ENCODE measurements at regions of chr19 and their contacts with region 1.

Region 1: GRCh38 chr19:18203863-18204393 is at the start of gene RAB3A:
- DNase-seq: peak; percentile 99
- ATAC-seq: peak; percentile 94
- H3K4me3 ChIP-seq: peak within 1 kb of the TSS; percentile 73 to 94 (median 83)
- H3K27ac ChIP-seq: peak within 1 kb of the TSS; percentile 60
- H3K4me1 ChIP-seq: peaks cover 13% of the 10 kb centered on the region
- H3K27me3 ChIP-seq: 0 out of 5 replicates have a peak, but pooled peaks cover 0 to 3% of the 10 kb centered on the region in 2 experiments
- CTCF ChIP-seq: peak; percentile 36
- EP300 ChIP-seq: no peak
- POLR2A ChIP-seq: no peak; a peak in 1 of 4 replicates
- RAD21 ChIP-seq: no peak; the same call in 1 of the 2 replicates
- total RNA-seq, gene RAB3A: 0.53 and 0.58 TPM in 2 replicates

Region 2: DNA sequence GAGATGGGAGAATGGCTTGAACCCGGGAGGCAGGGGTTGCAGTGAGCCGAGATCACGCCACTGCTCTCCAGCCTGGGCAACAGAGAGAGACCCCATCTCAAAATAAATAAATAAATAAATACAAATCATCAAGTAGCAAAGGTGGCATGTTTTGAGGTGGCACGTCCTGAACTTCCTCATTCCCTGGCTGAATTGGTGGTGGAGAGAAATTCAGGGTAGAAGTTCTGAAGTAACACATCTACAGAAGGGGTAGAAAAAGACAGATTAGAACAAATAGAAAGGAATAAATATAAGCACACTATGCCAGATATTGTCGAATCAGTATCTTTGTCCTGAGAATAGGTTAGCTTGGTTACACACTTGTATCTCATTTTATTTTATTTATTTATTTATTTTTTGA is 24.0 kb before region 1 on chr19:
- CTCF ChIA-PET with region 1: no interaction called
- POLR2A ChIA-PET with region 1: no interaction called
- in situ Hi-C with region 1: no loop called
- intact Hi-C with region 1: no loop called
- DNase-seq: no peak
- ATAC-seq: no peak
- H3K4me3 ChIP-seq: no peak overlapping the region
- H3K27ac ChIP-seq: no peak overlapping the region
- H3K4me1 ChIP-seq: peaks cover 7% of the 10 kb centered on the region
- H3K27me3 ChIP-seq: no peaks in the 10 kb centered on the region
- CTCF ChIP-seq: no peak
- EP300 ChIP-seq: no peak
- POLR2A ChIP-seq: no peak
- RAD21 ChIP-seq: no peak

Region 3: DNA sequence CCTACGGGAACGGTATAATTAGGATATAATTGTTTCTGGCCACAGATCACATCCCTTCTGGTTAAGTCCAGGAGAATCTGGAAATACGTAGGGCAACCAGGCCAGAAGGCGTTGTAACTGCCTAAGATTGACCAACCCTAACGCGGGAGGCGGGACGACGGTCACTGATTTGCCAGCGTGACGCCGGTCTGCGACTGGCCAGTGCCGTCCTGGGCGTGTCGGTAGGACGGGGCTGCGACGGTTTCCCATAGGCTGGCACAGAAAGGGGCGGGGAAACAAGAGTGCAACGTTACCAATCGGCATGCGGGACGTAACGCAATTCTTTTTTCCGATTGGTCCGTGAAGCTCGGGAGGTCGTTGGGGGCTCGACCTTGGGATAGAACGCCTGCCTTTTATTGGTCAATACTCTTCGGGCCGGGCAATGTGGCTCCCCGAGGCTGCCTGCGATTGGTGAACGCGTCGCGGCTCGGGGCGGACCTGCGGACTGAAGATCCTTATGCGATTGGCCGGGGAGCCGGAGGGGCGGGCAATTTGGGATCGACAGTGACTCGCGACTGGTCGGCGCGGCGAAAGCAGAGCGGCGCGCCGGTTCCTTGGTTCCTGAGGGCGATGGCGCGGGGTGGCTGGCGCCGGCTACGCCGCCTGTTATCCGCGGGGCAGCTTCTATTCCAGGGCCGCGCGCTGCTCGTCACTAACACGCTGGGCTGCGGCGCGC is 11.1 kb before region 1 on chr19 and contains the start of gene MPV17L2:
- CTCF ChIA-PET with region 1: no interaction called
- POLR2A ChIA-PET with region 1: interaction called, 27 read pairs
- in situ Hi-C with region 1: no loop called
- intact Hi-C with region 1: no loop called
- DNase-seq: peak; percentile 99
- ATAC-seq: peak; percentile 93
- H3K4me3 ChIP-seq: peak within 1 kb of the TSS; percentile 70 to 84 (median 83)
- H3K27ac ChIP-seq: peak within 1 kb of the TSS; percentile 73
- H3K4me1 ChIP-seq: peaks cover 30% of the 10 kb centered on the region
- H3K27me3 ChIP-seq: no peaks in the 10 kb centered on the region; a peak in 1 of 5 replicates
- CTCF ChIP-seq: no peak; the same call in 1 of the 2 replicates
- EP300 ChIP-seq: no peak
- POLR2A ChIP-seq: peak; percentile 66 to 85
- RAD21 ChIP-seq: 0 out of 2 replicates have a peak, but pooled peaks have one; percentile 38
- total RNA-seq, gene MPV17L2: 13.0 and 16.7 TPM in 2 replicates

Region 4: DNA sequence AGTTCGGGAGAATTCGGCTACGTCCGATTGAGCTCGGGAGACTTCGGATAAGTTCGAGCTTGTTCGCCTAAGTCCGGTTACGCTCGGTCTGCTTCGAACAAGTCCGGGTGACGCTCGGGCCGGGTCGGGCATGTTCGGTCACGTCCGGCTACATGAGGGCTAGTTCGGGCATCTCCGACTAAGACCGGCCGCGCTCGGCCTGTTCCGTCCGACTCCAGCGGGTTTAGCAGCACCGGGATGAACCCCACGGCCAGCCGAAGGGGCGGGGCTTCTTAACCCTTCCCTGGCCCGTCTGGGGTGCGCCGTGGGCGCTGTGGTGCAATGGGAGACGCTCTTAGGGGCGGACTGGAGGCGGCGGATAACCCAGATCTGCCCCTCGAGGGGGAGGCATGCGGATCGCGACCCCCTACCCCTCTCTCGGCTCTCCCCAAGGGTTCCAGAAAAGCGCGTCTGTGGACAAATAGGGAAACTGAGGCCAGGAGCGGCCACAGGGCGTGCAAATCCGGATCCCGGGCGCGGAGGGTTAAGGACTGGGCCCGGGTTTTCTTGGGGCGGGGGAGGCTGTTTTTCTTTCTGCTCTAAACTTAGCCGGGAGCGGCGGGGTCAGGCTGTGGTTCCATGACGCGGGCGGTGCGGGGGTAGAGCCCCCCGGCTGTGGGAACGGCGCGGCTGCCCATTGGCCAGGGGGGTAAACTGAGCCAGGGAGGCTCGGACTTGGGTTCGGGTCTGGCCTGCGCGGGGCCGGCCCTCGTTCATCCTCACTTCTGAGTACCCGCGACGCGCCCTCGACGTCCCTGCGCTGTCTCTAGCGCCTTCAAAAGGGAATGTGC is 20.8 kb after region 1 on chr19:
- CTCF ChIA-PET with region 1: no interaction called
- POLR2A ChIA-PET with region 1: interaction called, 6 read pairs
- in situ Hi-C with region 1: no loop called
- intact Hi-C with region 1: loop called (anchors 1 kb)
- DNase-seq: peak; percentile 95
- ATAC-seq: peak; percentile 94
- H3K4me3 ChIP-seq: peak overlapping the region; percentile 54 to 80 (median 58)
- H3K27ac ChIP-seq: peak overlapping the region; percentile 65
- H3K4me1 ChIP-seq: peaks cover 51% of the 10 kb centered on the region
- H3K27me3 ChIP-seq: peaks cover 1 to 7% of the 10 kb centered on the region in 2 experiments; a peak in 2 of 5 replicates
- CTCF ChIP-seq: no peak
- EP300 ChIP-seq: no peak
- POLR2A ChIP-seq: 0 out of 4 replicates have a peak, but pooled peaks of 1 of the 2 experiments have one; percentile 15
- RAD21 ChIP-seq: no peak

Region 5: GRCh38 chr19:18251587-18252369 is 47.9 kb after region 1 on chr19:
- CTCF ChIA-PET with region 1: interaction called, 38 read pairs
- POLR2A ChIA-PET with region 1: no interaction called
- in situ Hi-C with region 1: loop called (anchors 5 kb)
- intact Hi-C with region 1: loop called (anchors 1 kb)
- DNase-seq: peak; percentile 56
- ATAC-seq: peak; percentile 65
- H3K4me3 ChIP-seq: no peak overlapping the region
- H3K27ac ChIP-seq: no peak overlapping the region
- H3K4me1 ChIP-seq: peaks cover 21% of the 10 kb centered on the region
- H3K27me3 ChIP-seq: peaks cover 0 to 15% of the 10 kb centered on the region in 2 experiments; a peak in 3 of 5 replicates
- CTCF ChIP-seq: peak; percentile 92
- EP300 ChIP-seq: no peak
- POLR2A ChIP-seq: no peak
- RAD21 ChIP-seq: peak; percentile 91

Region 6: GRCh38 chr19:18322759-18323460 is 119.0 kb after region 1 on chr19 and contains the start of gene LSM4:
- CTCF ChIA-PET with region 1: no interaction called
- POLR2A ChIA-PET with region 1: no interaction called
- in situ Hi-C with region 1: no loop called
- intact Hi-C with region 1: loop called (anchors 5 kb)
- DNase-seq: peak; percentile 95
- ATAC-seq: peak; percentile 88
- H3K4me3 ChIP-seq: peak within 1 kb of the TSS; percentile 69 to 80 (median 72)
- H3K27ac ChIP-seq: peak within 1 kb of the TSS; percentile 84
- H3K4me1 ChIP-seq: peaks cover 73% of the 10 kb centered on the region
- H3K27me3 ChIP-seq: no peaks in the 10 kb centered on the region
- CTCF ChIP-seq: peak; percentile 59
- EP300 ChIP-seq: no peak
- POLR2A ChIP-seq: peak; percentile 66 to 69
- RAD21 ChIP-seq: peak; percentile 51
- total RNA-seq, gene LSM4: 166 and 188 TPM in 2 replicates

Region 7: DNA sequence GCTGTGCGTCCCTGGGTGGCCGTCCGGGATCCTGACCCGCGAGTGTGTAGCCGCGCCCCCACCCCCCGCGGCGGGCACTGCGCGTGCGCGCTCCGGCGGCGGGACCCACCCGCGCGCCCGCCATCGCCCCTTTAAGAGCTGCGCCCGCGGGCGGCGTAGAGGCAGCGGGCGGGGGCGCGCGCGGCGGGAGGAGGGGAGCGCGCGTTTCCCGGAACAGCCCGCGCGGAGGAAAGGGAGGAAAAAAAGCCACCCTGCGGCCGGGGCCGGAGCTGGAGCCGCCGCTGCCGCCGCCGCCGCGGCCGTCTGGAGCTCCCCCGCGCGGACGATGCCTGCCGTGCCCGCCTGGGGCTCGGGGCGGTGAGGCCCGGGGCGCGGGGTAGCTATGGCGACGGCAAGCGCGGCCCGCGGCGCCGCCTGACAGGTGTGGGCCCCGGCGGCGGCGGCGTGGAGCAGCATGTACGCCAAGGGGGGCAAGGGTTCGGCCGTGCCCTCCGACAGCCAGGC is 215.3 kb after region 1 on chr19 and contains the start of gene SSBP4:
- CTCF ChIA-PET with region 1: no interaction called
- POLR2A ChIA-PET with region 1: no interaction called
- in situ Hi-C with region 1: loop called (anchors 10 kb)
- intact Hi-C with region 1: loop called (anchors 5 kb)
- DNase-seq: peak; percentile 66
- ATAC-seq: peak; percentile 23
- H3K4me3 ChIP-seq: peak within 1 kb of the TSS; percentile 60 to 78 (median 76); a peak in 5 of 6 replicates
- H3K27ac ChIP-seq: peak within 1 kb of the TSS; percentile 64
- H3K4me1 ChIP-seq: peaks cover 65% of the 10 kb centered on the region
- H3K27me3 ChIP-seq: no peaks in the 10 kb centered on the region
- CTCF ChIP-seq: peak; percentile 34; the same call in 1 of the 2 replicates
- EP300 ChIP-seq: peak in 1 of 2 experiments; percentile 87; a peak in 2 of 4 replicates
- POLR2A ChIP-seq: no peak
- RAD21 ChIP-seq: peak; percentile 88
- total RNA-seq, gene SSBP4: 19.3 and 39.5 TPM in 2 replicates